Ovary (tissue), 10 donors: ENCODE measurements at regions of chr4 and their contacts with region 1.

Region 1: DNA sequence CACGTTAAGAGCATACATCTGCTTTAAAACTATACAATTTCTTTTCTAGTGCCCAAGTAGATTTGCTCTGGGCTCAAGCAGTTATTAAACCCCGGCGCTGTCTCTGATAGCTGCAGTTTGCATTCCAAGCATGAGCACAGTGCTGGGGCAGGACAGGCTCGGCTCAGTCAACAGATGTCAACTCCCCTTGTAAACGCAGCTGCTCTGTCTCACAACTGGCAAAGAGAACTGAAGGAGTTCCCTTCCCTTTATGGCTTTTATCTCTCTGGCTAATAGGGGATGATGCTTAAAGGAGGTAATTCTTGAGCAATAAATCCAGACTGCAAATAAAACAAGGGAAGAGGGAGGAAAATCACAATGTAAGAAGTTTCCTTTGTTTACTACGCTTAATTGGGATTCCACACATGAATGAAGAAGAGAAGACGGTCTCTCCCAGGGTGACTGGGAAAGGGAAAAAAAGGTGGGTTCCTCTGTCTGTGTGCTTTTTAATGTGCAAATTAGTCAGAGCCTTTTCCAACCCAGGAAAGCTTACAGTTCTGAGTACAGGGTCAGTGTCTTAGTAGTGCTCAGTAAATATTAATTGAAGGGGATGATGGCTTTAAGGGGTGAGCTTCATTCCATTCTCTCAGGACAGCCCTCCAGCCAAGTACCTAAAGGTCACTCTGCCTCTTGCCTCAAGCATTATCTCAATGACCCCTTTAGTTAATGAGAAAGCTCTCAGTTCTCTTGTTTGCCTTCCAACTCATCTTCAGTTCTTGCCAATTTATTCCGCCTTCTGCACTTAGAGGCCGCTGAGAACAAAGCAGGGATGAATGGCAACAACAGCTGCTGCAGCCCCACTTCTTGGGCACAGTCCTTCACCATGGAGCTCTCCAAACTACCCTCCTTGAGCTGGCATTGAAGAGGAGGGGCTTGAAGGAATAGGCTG is 155.7 kb upstream of the JADE1 start:
- DNase-seq: peak; percentile 51 to 77 (median 64)
- H3K4me3 ChIP-seq: no peak overlapping the region
- H3K27ac ChIP-seq: peak overlapping the region; percentile 1 to 46
- H3K4me1 ChIP-seq: peaks cover 7% of the 10 kb centered on the region
- H3K27me3 ChIP-seq: no peaks in the 10 kb centered on the region
- CTCF ChIP-seq: no peak
- EP300 ChIP-seq: no peak
- POLR2A ChIP-seq: no peak

Region 2: DNA sequence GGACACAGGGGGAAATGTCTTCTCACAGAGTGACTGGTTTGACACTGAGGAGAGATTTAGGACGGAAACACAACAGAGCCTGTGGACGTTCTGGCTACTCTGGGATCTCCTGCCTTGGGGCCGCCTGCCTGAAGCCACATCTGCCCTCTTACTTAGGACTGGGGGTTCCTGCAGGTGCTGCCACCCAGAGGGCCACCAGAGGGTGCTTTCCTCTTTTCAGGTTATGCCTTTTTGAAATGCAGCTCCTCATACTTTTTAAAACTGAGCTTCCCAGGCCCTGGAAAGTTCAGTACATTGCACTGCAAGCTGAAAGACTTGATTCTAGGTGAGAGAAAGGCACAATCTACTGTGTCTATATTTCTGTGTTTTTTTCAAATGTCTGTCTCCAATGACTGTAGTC is 273.9 kb before region 1 on chr4:
- intact Hi-C with region 1: no loop called
- DNase-seq: peak in 1 of 5 donors; percentile 37
- H3K4me3 ChIP-seq: no peak overlapping the region
- H3K27ac ChIP-seq: no peak overlapping the region
- H3K4me1 ChIP-seq: no peaks in the 10 kb centered on the region
- H3K27me3 ChIP-seq: no peaks in the 10 kb centered on the region
- CTCF ChIP-seq: peak in 1 of 3 donors; percentile 10
- EP300 ChIP-seq: no peak
- POLR2A ChIP-seq: no peak

Region 3: GRCh38 chr4:128600996-128601871 is 52.5 kb before region 1 on chr4:
- intact Hi-C with region 1: loop called in 1 of 4 experiments (anchors 5 kb)
- DNase-seq: peak; percentile 75 to 90 (median 82)
- H3K4me3 ChIP-seq: no peak overlapping the region
- H3K27ac ChIP-seq: peak overlapping the region; percentile 53 to 77
- H3K4me1 ChIP-seq: peaks cover 25% of the 10 kb centered on the region
- H3K27me3 ChIP-seq: no peaks in the 10 kb centered on the region
- CTCF ChIP-seq: no peak
- EP300 ChIP-seq: no peak
- POLR2A ChIP-seq: no peak

Region 4: GRCh38 chr4:128854433-128854832 is 200.7 kb after region 1 on chr4:
- intact Hi-C with region 1: loop called in 1 of 4 experiments (anchors 10 kb)
- DNase-seq: no peak
- H3K4me3 ChIP-seq: no peak overlapping the region
- H3K27ac ChIP-seq: no peak overlapping the region
- H3K4me1 ChIP-seq: peaks cover 6% of the 10 kb centered on the region
- H3K27me3 ChIP-seq: no peaks in the 10 kb centered on the region
- CTCF ChIP-seq: no peak
- EP300 ChIP-seq: no peak
- POLR2A ChIP-seq: no peak